WTC11 (cell line): ENCODE measurements at regions of chr1 and their contacts with region 1.

Region 1: GRCh38 chr1:201676197-201676596 is 137.3 kb downstream of the NAV1 start:
- DNase-seq: peak; percentile 50
- ATAC-seq: peak; percentile 66
- H3K4me3 Mint-ChIP-seq: peak overlapping the region; percentile 14; the same call in 1 of the 2 replicates
- H3K27ac Mint-ChIP-seq: peak overlapping the region; percentile 84
- H3K4me1 Mint-ChIP-seq: peaks cover 66% of the 10 kb centered on the region
- H3K27me3 Mint-ChIP-seq: no peaks in the 10 kb centered on the region
- CTCF ChIP-seq: no peak

Region 2: DNA sequence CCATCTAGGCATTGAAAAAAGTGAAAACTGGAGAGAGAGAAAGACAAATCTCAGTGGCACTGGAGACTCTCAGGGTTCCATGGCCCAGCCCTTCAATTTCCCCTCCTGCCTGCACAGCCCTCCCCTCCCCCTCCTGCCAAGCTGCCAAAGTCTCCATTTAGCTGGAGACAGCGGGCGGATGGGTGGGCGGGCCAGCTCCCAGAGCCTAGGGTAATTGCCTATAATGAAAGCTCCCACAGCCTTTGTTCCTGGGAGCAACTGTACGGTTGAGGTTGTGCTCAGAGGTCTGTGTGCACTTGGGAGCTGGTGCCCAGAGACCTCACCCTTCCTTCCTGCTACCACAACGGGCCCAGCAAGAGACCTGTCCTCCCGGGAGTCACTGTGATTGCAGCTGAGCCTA is 47.7 kb before region 1 on chr1:
- CTCF ChIA-PET with region 1: no interaction called
- POLR2A ChIA-PET with region 1: no interaction called
- DNase-seq: peak; percentile 38
- ATAC-seq: peak; percentile 73
- H3K4me3 Mint-ChIP-seq: no peak overlapping the region
- H3K27ac Mint-ChIP-seq: no peak overlapping the region
- H3K4me1 Mint-ChIP-seq: peaks cover 23% of the 10 kb centered on the region
- H3K27me3 Mint-ChIP-seq: peaks cover 5% of the 10 kb centered on the region; the same call in 1 of the 2 replicates
- CTCF ChIP-seq: no peak

Region 3: GRCh38 chr1:201649761-201650622 is 26.2 kb before region 1 on chr1:
- CTCF ChIA-PET with region 1: interaction called, 13 read pairs
- POLR2A ChIA-PET with region 1: interaction called, 10 read pairs
- DNase-seq: peak; percentile 92
- ATAC-seq: peak; percentile 46
- H3K4me3 Mint-ChIP-seq: peak overlapping the region; percentile 79
- H3K27ac Mint-ChIP-seq: peak overlapping the region; percentile 82; the same call in 1 of the 2 replicates
- H3K4me1 Mint-ChIP-seq: peaks cover 55% of the 10 kb centered on the region
- H3K27me3 Mint-ChIP-seq: peaks cover 17% of the 10 kb centered on the region
- CTCF ChIP-seq: no peak

Region 4: DNA sequence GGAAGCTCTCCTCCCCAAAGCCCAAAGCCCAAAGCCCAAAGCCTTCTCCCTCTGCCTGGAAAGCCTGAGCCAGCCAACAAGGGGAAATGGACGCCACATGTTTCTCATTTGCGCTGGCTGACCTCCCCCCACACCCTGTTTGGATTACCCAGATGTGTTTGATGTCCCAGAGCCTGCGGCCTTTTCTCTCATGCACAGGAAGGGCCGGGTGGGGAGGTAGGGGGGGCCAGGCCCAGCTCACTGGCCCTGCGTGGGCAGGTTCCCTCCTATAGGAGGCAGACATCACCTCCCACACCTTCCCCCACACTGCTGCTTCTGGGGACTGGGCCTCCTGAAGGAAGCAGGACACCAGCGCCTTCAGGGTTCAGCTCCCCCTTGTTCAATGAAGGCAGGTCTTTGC is 21.0 kb before region 1 on chr1:
- CTCF ChIA-PET with region 1: interaction called, 13 read pairs
- POLR2A ChIA-PET with region 1: interaction called, 10 read pairs
- DNase-seq: peak; percentile 42
- ATAC-seq: peak; percentile 58
- H3K4me3 Mint-ChIP-seq: no peak overlapping the region
- H3K27ac Mint-ChIP-seq: no peak overlapping the region
- H3K4me1 Mint-ChIP-seq: peaks cover 52% of the 10 kb centered on the region
- H3K27me3 Mint-ChIP-seq: peaks cover 4% of the 10 kb centered on the region
- CTCF ChIP-seq: no peak